Right ventricle myocardium inferior (tissue), 1 donor: ENCODE measurements at regions of chr7 and their contacts with region 1.

Region 1: GRCh38 chr7:113698556-113699220 is 220.1 kb downstream of the PPP1R3A start:
- DNase-seq: no peak
- ATAC-seq: no peak

Region 2: DNA sequence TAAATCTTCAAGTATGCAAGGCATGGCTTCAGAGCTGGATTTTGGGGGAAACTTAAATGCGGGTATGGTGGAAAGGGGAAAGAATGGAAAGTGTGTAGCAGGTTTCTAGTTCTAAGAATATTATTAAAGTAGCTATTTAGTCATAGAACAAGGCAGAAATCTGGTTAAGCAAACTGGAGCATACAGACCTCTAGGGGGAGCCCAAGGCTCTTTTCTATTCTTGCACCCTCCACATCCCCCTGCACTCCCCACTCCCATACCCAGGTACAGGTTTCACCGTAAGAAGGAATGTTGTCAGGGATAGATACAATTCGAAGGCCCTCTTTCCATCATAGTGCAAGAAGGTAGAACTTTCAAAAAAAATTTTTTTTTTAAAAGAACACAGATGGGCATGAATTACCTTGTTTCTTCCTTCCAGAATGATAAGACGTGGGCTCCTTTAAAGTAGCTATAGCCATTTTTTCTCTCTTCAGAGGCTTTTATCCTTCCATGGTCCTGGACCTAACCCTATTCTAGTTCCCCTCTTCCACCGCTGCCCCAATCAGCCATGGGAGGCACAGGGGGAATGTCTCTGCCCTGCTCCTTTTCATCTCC is 538.8 kb before region 1 on chr7:
- intact Hi-C with region 1: loop called (anchors 10 kb)
- DNase-seq: no peak
- ATAC-seq: no peak

Region 3: GRCh38 chr7:113404245-113404644 is 294.4 kb before region 1 on chr7:
- intact Hi-C with region 1: loop called (anchors 2 kb)
- DNase-seq: no peak
- ATAC-seq: no peak

Region 4: GRCh38 chr7:113608782-113609181 is 89.9 kb before region 1 on chr7:
- intact Hi-C with region 1: no loop called
- DNase-seq: no peak
- ATAC-seq: no peak